ENCODE measurements at regions of chr6 and their contacts with region 1.

Region 1: DNA sequence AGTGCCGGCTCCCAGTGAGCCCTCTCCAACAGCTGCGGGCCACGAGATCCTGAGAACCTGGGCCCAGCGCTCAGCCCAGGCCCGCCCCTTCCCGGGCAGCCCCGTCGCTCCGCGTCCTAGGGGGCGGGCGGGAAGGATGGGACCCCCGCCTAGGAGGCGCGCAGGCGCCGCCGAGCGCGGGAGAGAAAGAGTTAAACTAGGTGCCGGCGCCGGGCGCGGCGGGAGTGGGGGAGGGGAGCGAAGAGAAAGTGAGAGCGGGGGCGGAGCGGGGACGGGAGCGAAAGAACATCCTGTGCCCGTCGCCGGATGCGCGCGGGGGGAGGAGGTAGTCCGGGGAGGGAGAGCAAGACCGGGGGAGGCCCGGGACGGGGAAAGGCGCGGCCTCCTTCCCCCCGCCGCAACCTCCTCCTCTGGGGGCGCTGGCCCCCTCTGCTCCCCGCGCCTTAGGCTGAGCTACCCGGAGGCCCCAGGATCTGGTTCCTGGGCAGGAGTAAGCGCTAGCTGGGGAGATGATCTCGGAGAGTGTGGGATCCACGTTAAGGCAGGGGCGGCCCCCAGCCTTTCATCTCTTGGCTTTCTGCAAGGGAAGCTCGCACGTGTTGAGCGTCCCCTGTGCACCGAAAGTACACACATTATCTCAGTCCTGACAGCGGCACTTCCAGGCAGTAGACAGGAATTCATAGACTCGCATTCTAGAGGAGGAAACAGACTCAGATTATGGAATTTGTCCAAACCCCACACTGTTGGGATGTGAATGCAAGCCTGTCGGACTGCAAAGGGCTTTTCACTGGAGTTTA is 4.9 kb upstream of the ARMC12 start:
- DNase-seq: peak; percentile 98
- H3K4me3 Mint-ChIP-seq: peak overlapping the region; percentile 78
- H3K27ac Mint-ChIP-seq: peak overlapping the region; percentile 87
- H3K4me1 Mint-ChIP-seq: peaks cover 78% of the 10 kb centered on the region
- H3K27me3 Mint-ChIP-seq: no peaks in the 10 kb centered on the region

Region 2: DNA sequence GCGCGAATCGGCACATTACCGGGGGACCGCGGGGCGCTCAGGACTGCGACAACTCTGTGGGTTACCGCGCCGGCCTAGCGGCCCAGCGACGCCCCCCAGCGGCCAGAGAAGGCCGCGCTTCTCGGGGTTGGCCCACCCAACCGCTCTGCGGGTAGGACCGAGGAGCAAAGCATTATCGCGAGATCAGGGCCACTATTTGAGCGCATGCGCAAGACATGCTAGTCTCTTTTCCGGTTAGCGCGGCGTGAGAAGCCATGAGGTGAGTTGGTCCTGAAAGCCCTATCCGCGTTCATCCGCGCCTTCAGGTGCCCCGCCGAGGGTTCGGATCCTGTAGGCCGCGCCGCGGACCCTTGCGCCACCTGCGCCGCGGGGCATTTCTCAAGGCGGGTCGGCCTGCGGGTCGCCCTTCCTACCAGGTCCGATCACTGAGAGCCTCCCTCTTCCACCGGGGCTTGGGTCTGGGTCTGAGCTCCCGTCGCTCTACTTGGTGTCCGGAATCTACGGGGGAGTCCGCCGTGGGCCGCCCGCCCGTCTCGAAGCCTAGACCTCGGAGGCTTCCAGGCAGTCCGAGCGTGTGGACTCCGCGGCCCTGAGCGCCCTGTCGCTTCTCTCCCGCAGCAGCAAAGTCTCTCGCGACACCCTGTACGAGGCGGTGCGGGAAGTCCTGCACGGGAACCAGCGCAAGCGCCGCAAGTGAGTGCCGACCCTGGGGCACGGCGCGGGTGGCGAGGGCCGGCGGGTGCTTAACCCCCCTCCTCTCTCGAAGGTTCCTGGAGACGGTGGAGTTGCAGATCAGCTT is 263.6 kb before region 1 on chr6 and contains the start of gene RPL10A:
- CTCF ChIA-PET with region 1: interaction called, 3 read pairs
- intact Hi-C with region 1: loop called (anchors 5 kb)
- DNase-seq: peak; percentile 98
- H3K4me3 Mint-ChIP-seq: peak within 1 kb of the TSS; percentile 95
- H3K27ac Mint-ChIP-seq: peak within 1 kb of the TSS; percentile 95
- H3K4me1 Mint-ChIP-seq: peaks cover 39% of the 10 kb centered on the region
- H3K27me3 Mint-ChIP-seq: no peaks in the 10 kb centered on the region
- total RNA-seq, gene RPL10A: 2,437 to 2,507 TPM

Region 3: GRCh38 chr6:35562053-35562452 is 169.9 kb before region 1 on chr6:
- CTCF ChIA-PET with region 1: interaction called, 42 read pairs
- intact Hi-C with region 1: no loop called
- DNase-seq: no peak
- H3K4me3 Mint-ChIP-seq: no peak overlapping the region
- H3K27ac Mint-ChIP-seq: no peak overlapping the region
- H3K4me1 Mint-ChIP-seq: no peaks in the 10 kb centered on the region
- H3K27me3 Mint-ChIP-seq: no peaks in the 10 kb centered on the region

Region 4: DNA sequence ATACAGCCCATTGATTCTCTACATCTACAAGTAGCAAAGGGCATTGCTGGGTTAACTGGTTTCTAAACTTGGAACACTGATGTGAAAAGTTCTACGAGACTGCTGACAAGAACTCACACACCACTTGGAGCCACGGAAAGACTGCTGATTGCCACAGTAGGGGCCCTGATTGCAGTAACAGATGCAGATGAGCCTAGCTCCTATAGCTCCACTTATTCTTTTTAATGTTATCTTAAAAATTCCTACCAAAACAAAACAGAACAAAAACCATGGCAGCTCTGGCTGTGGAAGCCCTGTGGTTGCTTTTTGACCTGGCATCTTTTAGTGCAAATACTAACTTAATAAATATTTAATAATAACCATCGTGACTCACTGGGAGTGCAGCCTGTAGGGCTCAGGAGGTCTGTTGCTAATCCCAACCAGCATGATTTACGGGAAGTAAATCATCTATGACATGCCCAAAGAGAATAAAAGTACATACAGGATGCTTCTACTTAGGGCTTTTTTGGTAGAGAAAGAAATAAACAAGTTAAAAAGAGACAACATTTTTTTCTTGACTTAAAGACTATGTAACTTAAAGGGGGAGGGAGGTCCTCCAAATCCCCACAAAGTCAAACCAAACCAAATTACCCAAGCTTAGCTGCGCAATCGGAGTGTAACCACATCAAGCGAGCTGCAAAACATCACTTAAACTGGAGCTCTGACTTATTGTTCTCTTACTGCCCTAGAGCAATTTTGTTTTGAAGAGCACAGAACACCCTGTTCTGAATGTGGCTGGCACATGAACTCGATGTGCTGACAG is 130.4 kb before region 1 on chr6:
- CTCF ChIA-PET with region 1: interaction called, 44 read pairs
- intact Hi-C with region 1: loop called (anchors 2 kb)
- DNase-seq: peak; percentile 78
- H3K4me3 Mint-ChIP-seq: peak overlapping the region; percentile 58
- H3K27ac Mint-ChIP-seq: peak overlapping the region; percentile 80
- H3K4me1 Mint-ChIP-seq: peaks cover 79% of the 10 kb centered on the region
- H3K27me3 Mint-ChIP-seq: no peaks in the 10 kb centered on the region

Region 5: GRCh38 chr6:35635601-35636597 is 96.0 kb before region 1 on chr6:
- CTCF ChIA-PET with region 1: interaction called, 19 read pairs
- intact Hi-C with region 1: no loop called
- DNase-seq: no peak
- H3K4me3 Mint-ChIP-seq: no peak overlapping the region
- H3K27ac Mint-ChIP-seq: peak overlapping the region; percentile 89
- H3K4me1 Mint-ChIP-seq: peaks cover 55% of the 10 kb centered on the region
- H3K27me3 Mint-ChIP-seq: no peaks in the 10 kb centered on the region

Region 6: DNA sequence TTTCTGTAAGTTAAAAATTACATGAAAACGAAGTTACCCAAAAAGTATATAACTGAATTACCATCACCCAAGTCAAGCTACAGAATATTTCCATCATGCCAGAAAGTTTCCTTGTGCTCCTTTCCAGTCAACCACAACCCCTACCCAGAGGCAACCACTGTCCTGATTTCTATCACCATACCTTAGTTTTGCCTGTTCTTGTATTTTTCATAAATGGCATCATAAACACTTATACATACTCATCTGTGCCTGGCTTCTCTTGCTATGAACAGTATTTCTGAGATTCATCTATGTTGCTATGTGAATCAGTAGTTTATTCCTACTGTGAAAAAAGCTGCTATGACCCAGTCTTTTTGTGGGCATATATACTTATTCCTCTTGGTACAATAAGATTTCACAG is 50.6 kb before region 1 on chr6:
- CTCF ChIA-PET with region 1: interaction called, 42 read pairs
- intact Hi-C with region 1: loop called (anchors 1 kb)
- DNase-seq: peak; percentile 64
- H3K4me3 Mint-ChIP-seq: peak overlapping the region; percentile 43
- H3K27ac Mint-ChIP-seq: peak overlapping the region; percentile 74
- H3K4me1 Mint-ChIP-seq: peaks cover 68% of the 10 kb centered on the region
- H3K27me3 Mint-ChIP-seq: no peaks in the 10 kb centered on the region

Region 7: GRCh38 chr6:35719830-35720733 is 11.9 kb before region 1 on chr6:
- CTCF ChIA-PET with region 1: interaction called, 8 read pairs
- intact Hi-C with region 1: loop called (anchors 1 kb)
- DNase-seq: peak; percentile 84
- H3K4me3 Mint-ChIP-seq: peak overlapping the region; percentile 80
- H3K27ac Mint-ChIP-seq: peak overlapping the region; percentile 91
- H3K4me1 Mint-ChIP-seq: peaks cover 74% of the 10 kb centered on the region
- H3K27me3 Mint-ChIP-seq: no peaks in the 10 kb centered on the region

Region 8: DNA sequence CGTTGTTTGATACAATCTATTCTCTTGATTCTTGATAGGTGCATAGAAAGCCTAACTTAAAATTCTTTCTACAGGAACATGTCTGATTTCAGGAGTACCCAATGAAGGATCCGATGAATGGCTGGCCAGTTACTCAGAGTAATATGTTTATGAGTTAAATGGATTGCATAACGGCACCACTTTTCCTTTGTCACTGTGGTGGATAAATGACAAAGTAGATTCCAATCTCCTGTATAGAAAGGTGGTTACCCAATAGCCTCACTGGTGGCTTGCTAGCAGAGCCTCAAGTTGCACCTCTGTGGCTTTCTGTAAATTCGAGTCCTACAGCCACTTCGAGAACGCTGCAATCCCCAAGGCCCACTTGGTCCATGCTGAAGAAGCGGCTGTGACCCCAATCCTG is 101.6 kb after region 1 on chr6:
- CTCF ChIA-PET with region 1: no interaction called
- intact Hi-C with region 1: no loop called
- DNase-seq: no peak
- H3K4me3 Mint-ChIP-seq: no peak overlapping the region
- H3K27ac Mint-ChIP-seq: no peak overlapping the region
- H3K4me1 Mint-ChIP-seq: no peaks in the 10 kb centered on the region
- H3K27me3 Mint-ChIP-seq: no peaks in the 10 kb centered on the region